CD4-positive, alpha-beta memory T cell (primary cell): ENCODE measurements at regions of chr5 and their contacts with region 1.

Region 1: GRCh38 chr5:14644623-14645237 is 19.8 kb upstream of the OTULIN start:
- DNase-seq: no peak
- H3K4me3 ChIP-seq: no peak overlapping the region
- H3K4me3 Mint-ChIP-seq: no peak overlapping the region
- H3K27ac ChIP-seq: no peak overlapping the region
- H3K27ac Mint-ChIP-seq: no peak overlapping the region
- H3K4me1 ChIP-seq: no peaks in the 10 kb centered on the region
- H3K4me1 Mint-ChIP-seq: no peaks in the 10 kb centered on the region
- H3K27me3 ChIP-seq: peaks cover 4% of the 10 kb centered on the region
- H3K27me3 Mint-ChIP-seq: peaks cover 15 to 27% of the 10 kb centered on the region in 2 donors

Region 2: GRCh38 chr5:14004598-14005394 is 639.9 kb before region 1 on chr5:
- CTCF ChIA-PET with region 1: no interaction called
- POLR2A ChIA-PET with region 1: no interaction called
- intact Hi-C with region 1: no loop called
- DNase-seq: no peak
- H3K4me3 ChIP-seq: no peak overlapping the region
- H3K4me3 Mint-ChIP-seq: no peak overlapping the region
- H3K27ac ChIP-seq: no peak overlapping the region
- H3K27ac Mint-ChIP-seq: no peak overlapping the region
- H3K4me1 ChIP-seq: no peaks in the 10 kb centered on the region
- H3K4me1 Mint-ChIP-seq: no peaks in the 10 kb centered on the region
- H3K27me3 ChIP-seq: peaks cover 3% of the 10 kb centered on the region
- H3K27me3 Mint-ChIP-seq: peaks cover 4% of the 10 kb centered on the region in 2 donors

Region 3: DNA sequence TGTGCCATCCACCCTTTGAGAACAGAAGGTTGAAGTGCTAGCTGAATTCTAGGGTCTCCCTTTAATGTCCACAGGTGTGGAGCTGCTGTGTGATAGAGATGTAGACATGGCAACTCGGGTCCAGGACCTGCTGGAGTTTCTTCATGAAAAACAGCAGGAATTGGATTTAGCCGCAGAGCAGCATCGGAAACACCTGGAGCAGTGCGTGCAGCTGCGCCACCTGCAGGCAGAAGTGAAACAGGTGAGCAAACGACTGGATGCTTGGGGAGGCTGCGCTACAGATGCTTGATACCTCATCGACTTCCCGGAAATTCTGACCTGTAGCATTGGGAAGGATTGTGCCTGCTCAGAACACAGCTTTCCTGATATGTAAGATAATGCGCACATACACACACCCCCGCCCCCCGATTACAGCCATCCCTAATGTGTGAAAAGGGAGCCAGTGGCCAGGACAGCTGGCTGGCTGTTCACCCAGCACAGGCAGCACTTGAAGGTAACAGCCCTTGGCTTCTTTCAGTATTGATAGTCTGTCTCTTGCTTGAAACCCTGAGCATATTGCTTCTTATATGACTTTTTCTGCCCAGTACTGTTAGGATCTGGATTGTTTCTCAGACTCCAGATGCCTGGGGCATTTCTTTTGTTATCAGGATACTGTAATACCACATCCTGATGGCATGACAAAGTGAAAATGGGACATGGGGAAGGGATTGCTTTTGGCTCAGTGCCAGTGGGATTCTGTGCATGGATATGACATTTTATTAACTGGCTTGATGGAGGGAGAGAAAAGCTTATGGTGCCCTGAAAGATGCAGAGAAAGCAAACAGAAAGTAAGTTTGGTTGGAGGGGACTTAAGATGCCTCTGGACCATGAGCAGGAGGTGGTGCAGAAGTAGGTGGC is 279.9 kb before region 1 on chr5:
- CTCF ChIA-PET with region 1: interaction called, 153 read pairs
- POLR2A ChIA-PET with region 1: interaction called, 3 read pairs
- intact Hi-C with region 1: loop called (anchors 1 kb)
- DNase-seq: no peak
- H3K4me3 ChIP-seq: no peak overlapping the region
- H3K4me3 Mint-ChIP-seq: peak overlapping the region in 1 of 8 donors; percentile 5
- H3K27ac ChIP-seq: no peak overlapping the region
- H3K27ac Mint-ChIP-seq: peak overlapping the region in 4 of 7 donors; percentile 0 to 66 (median 48)
- H3K4me1 ChIP-seq: peaks cover 28% of the 10 kb centered on the region
- H3K4me1 Mint-ChIP-seq: peaks cover 13 to 33% (median 25%) of the 10 kb centered on the region in 4 donors
- H3K27me3 ChIP-seq: no peaks in the 10 kb centered on the region
- H3K27me3 Mint-ChIP-seq: peaks cover 2% of the 10 kb centered on the region in 2 donors

Region 4: DNA sequence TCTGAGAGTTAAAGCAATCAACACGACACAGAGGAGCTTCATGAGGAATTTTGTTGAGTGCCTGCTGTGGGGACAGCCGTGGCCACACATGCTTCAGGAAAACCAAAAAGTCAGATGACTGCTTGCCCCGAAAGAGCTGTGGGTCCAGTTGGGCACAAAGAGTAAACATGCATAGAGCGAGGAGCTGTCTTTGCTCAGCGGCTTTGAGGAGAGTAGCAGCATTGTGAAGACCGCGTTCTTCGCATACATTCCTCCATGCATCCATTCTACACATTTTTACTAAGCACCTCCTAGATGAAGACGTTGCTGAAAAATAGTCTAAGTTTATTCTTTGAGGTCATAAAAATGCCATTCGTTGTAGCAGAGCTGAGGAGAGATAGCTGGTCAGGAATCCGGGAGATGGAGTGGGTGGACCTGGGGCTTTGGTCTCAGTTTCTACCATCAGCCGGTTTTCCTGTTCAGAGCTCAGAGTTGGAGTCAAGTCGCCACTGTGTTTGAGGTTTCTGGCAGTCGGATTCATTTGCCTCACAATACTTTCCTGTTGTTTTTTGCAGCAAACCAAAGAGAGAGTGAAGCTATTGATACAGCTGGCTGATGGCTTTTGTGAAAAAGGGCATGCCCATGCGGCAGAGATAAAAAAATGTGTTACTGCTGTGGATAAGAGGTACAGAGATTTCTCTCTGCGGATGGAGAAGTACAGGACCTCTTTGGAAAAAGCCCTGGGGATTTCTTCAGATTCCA is 257.7 kb before region 1 on chr5:
- CTCF ChIA-PET with region 1: interaction called, 28 read pairs
- POLR2A ChIA-PET with region 1: no interaction called
- intact Hi-C with region 1: no loop called
- DNase-seq: no peak
- H3K4me3 ChIP-seq: no peak overlapping the region
- H3K4me3 Mint-ChIP-seq: no peak overlapping the region
- H3K27ac ChIP-seq: no peak overlapping the region
- H3K27ac Mint-ChIP-seq: no peak overlapping the region
- H3K4me1 ChIP-seq: no peaks in the 10 kb centered on the region
- H3K4me1 Mint-ChIP-seq: no peaks in the 10 kb centered on the region
- H3K27me3 ChIP-seq: no peaks in the 10 kb centered on the region
- H3K27me3 Mint-ChIP-seq: peaks cover 0 to 9% of the 10 kb centered on the region in 2 donors

Region 5: DNA sequence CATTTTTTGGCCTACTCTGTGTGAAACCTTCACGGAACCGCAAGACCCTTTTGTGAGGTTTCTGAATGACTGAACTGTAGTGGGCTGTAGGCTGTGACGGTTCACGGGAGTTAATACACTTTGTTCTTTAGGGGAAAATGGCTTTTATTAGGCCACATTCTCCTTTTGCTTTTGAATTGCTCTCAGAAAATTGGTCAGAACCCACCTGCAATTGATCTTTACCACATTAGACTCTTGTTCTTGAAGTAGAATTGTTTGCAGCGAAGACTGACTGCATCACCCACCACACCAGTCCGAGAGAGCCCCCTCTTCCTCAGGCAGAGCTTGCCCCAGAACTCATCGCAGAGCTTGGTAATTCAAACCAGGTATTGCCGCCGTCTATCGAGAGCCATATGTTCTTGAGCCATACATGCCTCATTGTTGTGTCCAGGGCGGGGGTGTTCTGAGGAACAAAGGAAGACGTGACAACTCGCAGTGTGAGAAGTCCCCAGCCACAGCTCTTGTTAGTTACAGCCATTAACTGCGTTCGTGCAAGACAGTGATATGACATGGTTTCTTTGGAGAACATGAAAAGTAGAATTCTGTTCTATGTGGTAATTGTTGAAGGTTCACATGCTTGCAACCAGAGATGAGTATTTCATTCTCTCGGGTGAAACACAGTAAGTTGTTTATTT is 229.6 kb before region 1 on chr5:
- CTCF ChIA-PET with region 1: interaction called, 25 read pairs
- POLR2A ChIA-PET with region 1: interaction called, 3 read pairs
- intact Hi-C with region 1: no loop called
- DNase-seq: peak in 4 of 5 donors; percentile 13 to 19 (median 16)
- H3K4me3 ChIP-seq: peak overlapping the region in 1 of 2 donors; percentile 29
- H3K4me3 Mint-ChIP-seq: peak overlapping the region; percentile 48 to 79 (median 63)
- H3K27ac ChIP-seq: peak overlapping the region; percentile 58
- H3K27ac Mint-ChIP-seq: peak overlapping the region; percentile 83 to 98 (median 95)
- H3K4me1 ChIP-seq: peaks cover 47% of the 10 kb centered on the region
- H3K4me1 Mint-ChIP-seq: peaks cover 32 to 66% (median 46%) of the 10 kb centered on the region in 4 donors
- H3K27me3 ChIP-seq: no peaks in the 10 kb centered on the region
- H3K27me3 Mint-ChIP-seq: peaks cover 0 to 2% of the 10 kb centered on the region in 2 donors

Region 6: GRCh38 chr5:14628346-14628745 is 16.4 kb before region 1 on chr5:
- CTCF ChIA-PET with region 1: interaction called, 12 read pairs
- POLR2A ChIA-PET with region 1: no interaction called
- intact Hi-C with region 1: no loop called
- DNase-seq: peak; percentile 35 to 46 (median 42)
- H3K4me3 ChIP-seq: no peak overlapping the region
- H3K4me3 Mint-ChIP-seq: no peak overlapping the region
- H3K27ac ChIP-seq: no peak overlapping the region
- H3K27ac Mint-ChIP-seq: no peak overlapping the region
- H3K4me1 ChIP-seq: no peaks in the 10 kb centered on the region
- H3K4me1 Mint-ChIP-seq: no peaks in the 10 kb centered on the region
- H3K27me3 ChIP-seq: no peaks in the 10 kb centered on the region
- H3K27me3 Mint-ChIP-seq: peaks cover 0 to 3% of the 10 kb centered on the region in 2 donors

Region 7: GRCh38 chr5:15013654-15014463 is 369.1 kb after region 1 on chr5:
- CTCF ChIA-PET with region 1: no interaction called
- POLR2A ChIA-PET with region 1: no interaction called
- intact Hi-C with region 1: loop called (anchors 1 kb)
- DNase-seq: peak in 4 of 5 donors; percentile 19 to 36 (median 28)
- H3K4me3 ChIP-seq: no peak overlapping the region
- H3K4me3 Mint-ChIP-seq: no peak overlapping the region
- H3K27ac ChIP-seq: no peak overlapping the region
- H3K27ac Mint-ChIP-seq: no peak overlapping the region
- H3K4me1 ChIP-seq: no peaks in the 10 kb centered on the region
- H3K4me1 Mint-ChIP-seq: no peaks in the 10 kb centered on the region
- H3K27me3 ChIP-seq: no peaks in the 10 kb centered on the region
- H3K27me3 Mint-ChIP-seq: peaks cover 0 to under 1% of the 10 kb centered on the region in 2 donors